HAP-1 (cell line): ENCODE measurements at regions of chr20 and their contacts with region 1.

Region 1: GRCh38 chr20:24917797-24918578 is 31.1 kb upstream of the CST7 start:
- DNase-seq: peak; percentile 64 to 83
- H3K4me3 ChIP-seq: no peak overlapping the region
- H3K4me1 ChIP-seq: no peaks in the 10 kb centered on the region
- H3K27me3 ChIP-seq: no peaks in the 10 kb centered on the region

Region 2: GRCh38 chr20:23782366-23782985 is 1135.5 kb before region 1 on chr20:
- in situ Hi-C with region 1: loop called (anchors 25 kb)
- DNase-seq: peak in 1 of 2 experiments; percentile 17
- H3K4me3 ChIP-seq: no peak overlapping the region
- H3K4me1 ChIP-seq: no peaks in the 10 kb centered on the region
- H3K27me3 ChIP-seq: no peaks in the 10 kb centered on the region

Region 3: DNA sequence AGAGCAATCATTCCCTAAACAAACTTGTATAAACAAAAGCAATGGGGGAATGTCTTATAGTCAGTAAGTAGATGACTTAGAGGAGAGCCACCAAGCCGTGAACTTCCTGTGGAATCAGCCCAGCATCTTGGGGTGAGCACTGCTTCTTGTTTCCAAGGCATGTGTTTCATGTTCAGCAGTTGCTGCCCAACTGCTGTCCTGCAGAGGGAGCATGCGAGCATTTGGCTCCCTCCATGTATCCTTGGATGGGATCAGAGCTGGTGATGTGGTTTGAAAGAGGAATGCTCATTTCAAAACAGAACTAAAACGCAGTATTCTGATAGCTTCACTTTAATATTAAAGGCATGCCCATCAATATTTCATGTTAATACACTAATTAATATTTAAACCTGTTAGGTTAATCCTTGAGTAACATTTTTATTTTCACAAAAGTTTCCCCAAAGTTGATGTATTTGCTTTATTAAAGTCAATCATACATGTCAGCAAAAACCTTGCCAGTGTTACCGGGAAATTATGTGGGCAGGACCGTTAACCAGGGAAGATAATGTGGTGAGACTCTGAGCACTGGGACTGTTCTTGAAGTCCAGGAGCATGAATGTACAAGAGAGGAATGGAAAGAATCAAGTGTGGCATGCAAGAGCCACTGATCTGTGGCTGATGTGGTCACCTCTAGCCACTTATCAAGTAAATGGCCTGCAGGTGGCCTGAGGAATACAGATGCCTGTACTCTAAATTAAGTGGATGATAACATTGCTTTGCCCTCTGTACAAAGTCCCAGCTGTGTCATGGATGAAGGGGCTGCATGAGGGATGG is 757.2 kb before region 1 on chr20:
- in situ Hi-C with region 1: loop called (anchors 25 kb)
- DNase-seq: peak in 1 of 2 experiments; percentile 32
- H3K4me3 ChIP-seq: no peak overlapping the region
- H3K4me1 ChIP-seq: no peaks in the 10 kb centered on the region
- H3K27me3 ChIP-seq: no peaks in the 10 kb centered on the region

Region 4: DNA sequence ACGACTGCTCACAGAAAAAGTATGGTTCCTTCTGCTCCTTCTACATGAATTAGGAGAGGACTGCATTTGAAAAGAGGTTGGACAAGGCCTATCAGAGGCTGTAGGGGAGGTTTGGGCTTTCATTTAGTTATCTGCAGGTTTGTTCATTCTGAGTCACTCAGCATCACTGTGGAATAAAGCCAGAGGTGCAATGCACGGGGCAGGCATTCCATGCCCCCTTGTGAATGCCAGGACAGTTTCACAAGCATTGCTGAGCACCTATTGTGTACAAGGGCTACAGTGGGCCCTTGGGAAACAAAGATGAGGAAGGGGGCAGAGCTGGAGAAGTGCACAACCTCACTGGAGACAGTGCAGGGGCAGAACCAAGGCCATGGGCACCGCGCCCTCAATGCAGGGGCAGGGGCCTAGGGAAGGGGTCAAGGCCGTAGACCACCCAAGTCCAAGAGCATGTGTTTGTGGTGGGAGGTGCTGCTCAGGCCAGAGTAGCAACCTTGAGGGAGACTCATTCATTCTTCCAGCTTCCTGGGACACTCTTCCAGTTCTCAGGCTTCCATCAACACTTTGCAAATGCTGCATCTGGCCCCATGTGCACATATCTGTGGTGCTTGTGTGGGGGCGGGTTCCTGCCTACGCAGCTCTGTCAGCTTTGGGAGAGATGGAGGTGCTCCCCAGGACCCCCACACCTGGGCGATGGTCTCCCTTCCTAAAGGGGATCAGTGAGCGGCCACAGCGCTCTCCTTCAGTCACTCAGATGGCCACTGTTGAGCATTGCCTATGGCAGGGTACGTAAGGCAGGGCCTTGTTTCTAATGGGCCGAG is 244.1 kb before region 1 on chr20:
- in situ Hi-C with region 1: no loop called
- DNase-seq: no peak
- H3K4me3 ChIP-seq: no peak overlapping the region
- H3K4me1 ChIP-seq: no peaks in the 10 kb centered on the region
- H3K27me3 ChIP-seq: no peaks in the 10 kb centered on the region

Region 5: DNA sequence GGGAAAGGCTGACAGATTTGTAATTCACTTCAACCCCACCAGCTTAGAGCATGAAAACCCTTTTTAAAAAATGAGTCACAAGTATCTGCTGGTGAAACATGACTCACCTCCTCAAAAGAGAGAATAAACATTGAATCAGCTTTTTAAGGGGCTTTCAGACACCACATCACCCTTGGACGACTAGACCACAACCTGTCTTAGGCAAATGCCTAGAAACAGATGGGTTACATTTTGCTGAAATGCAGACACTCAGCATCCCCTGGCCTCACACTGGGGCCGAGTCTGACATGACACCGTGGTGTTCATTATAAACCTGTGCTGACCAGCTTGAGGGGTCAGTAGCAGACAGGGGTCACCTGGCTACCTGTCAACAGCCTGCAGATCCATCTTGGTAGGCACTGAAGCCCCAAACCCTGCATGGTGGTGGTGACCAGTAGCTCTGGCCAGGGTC is 144.2 kb before region 1 on chr20:
- in situ Hi-C with region 1: loop called (anchors 25 kb)
- DNase-seq: no peak
- H3K4me3 ChIP-seq: no peak overlapping the region
- H3K4me1 ChIP-seq: no peaks in the 10 kb centered on the region
- H3K27me3 ChIP-seq: no peaks in the 10 kb centered on the region

Region 6: DNA sequence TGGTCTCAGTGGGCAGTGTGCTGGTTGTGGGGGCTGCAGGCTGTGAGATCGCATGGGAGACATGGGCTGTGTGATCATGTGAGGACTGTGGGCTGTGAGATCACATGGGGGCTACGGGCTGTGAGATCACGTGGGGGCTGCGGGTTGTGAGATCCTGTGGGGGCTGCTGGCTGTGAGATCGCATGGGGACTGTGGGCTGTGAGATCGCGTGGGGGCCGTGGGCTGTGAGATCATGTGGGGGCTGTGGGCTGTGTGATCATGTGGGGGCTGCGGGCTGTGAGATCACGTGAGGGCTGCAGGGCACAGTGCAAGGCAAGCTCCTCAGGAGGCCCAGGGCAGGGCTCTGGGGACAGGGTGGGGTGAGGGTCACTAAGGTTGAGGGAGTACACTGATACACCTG is 109.4 kb before region 1 on chr20:
- in situ Hi-C with region 1: no loop called
- DNase-seq: no peak
- H3K4me3 ChIP-seq: no peak overlapping the region
- H3K4me1 ChIP-seq: no peaks in the 10 kb centered on the region
- H3K27me3 ChIP-seq: no peaks in the 10 kb centered on the region